ENCODE measurements at regions of chr19 and their contacts with region 1.

Region 1: DNA sequence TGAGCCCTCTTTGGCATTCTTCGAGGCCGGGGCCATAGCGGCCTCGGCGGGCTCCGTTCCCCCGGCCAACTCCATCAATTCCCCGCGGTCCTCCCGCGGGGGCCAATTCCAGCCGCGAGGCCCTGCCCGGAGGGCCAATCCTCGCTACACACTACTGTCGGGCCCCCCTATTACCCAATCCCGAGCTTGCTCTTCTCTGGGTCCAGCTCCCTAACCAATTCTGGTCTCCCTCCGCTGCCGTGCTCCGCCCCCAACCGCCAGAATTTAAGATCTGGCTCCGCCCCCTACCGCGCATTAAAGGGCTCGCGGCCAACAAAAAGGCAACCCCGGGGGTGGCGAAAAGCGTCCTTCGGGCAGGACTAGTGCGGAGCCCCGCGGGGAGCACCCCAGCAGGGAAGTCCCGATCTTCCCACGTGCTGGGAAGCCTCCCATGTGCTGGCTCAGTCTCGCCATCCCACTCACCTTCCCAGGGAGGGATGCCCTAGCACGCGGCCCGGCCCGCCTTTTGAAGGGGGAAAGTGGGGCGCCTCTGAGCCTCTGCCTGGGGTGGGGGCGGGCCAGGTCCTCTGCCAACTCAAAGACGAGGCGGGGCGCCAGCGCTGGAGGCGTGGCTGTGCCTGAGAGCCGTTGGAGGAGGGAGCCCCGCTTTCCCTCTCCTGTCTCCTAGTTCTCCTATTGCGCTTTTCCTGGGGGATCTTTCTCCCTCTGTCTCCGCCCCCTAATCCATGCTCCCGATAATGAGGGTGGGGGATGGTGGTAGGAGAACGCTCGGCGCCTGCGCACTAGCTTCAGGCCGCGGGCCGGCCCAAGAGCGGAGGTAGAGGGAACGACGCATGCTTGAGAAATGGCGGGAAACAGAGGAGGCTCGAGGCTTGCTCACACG is 3.5 kb downstream of the LIPE start:
- DNase-seq: peak; percentile 94 to 100
- ATAC-seq: peak; percentile 80 to 96
- H3K4me3 ChIP-seq: peak overlapping the region; percentile 48
- H3K27ac ChIP-seq: peak overlapping the region; percentile 52 to 78
- H3K4me1 ChIP-seq: peaks cover 18% of the 10 kb centered on the region
- CTCF ChIP-seq: no peak
- EP300 ChIP-seq: no peak
- POLR2A ChIP-seq: no peak
- RAD21 ChIP-seq: no peak

Region 2: GRCh38 chr19:42386974-42387707 is 36.6 kb before region 1 on chr19:
- CTCF ChIA-PET with region 1: interaction called, 21 read pairs
- POLR2A ChIA-PET with region 1: no interaction called
- DNase-seq: peak; percentile 95 to 100
- ATAC-seq: peak; percentile 92 to 97
- H3K4me3 ChIP-seq: peak overlapping the region; percentile 49
- H3K27ac ChIP-seq: peak overlapping the region; percentile 80 to 86
- H3K4me1 ChIP-seq: peaks cover 9% of the 10 kb centered on the region; the same call in 2 of the 3 replicates
- CTCF ChIP-seq: peak; percentile 93
- EP300 ChIP-seq: no peak
- POLR2A ChIP-seq: peak; percentile 98
- RAD21 ChIP-seq: peak; percentile 56 to 74

Region 3: DNA sequence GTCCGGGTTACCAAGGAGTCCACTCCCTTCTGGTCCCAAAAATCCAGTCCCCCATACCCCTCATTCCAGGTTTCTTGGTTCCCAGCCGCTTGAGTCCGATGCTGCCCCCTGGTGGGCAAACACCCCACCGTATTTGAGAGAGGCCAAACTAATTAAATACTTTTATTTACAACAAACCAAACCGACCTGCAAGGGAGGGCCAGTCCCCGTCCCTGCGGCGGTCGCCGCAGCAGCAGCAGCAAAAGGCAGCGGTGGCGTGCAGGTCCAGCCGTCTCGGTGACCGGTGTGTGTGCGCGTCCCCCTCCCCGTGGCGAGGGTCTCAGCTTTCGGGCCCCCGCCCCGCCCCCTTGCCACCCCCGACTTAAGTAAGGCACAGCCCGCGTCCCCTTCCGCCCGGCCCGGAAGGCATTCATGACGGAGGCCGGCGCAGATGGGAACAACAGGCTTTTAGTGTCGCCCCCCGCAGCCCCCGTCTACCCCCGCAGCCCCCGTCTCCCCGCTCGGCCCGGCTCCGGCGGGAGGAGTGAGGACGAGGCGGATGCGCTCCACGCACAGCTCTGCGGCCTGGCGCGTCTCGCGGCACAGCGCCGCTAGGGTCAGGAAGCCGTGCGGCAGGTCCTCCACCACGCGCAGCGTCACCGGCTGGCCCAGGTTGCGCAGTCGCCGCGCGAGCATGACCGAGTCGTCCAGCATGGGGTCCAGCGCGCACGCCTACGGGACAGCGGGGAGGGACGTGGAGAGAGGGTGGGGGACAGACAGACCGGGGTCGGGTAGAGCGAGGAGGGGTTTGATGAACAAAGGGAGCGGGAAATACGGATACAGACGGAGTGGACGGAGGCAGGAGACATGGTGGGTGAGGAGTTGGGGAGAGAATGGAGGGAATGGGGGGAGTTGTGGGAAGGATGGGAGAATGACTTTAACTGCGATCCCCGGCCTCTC is 22.1 kb before region 1 on chr19:
- CTCF ChIA-PET with region 1: interaction called, 302 read pairs
- POLR2A ChIA-PET with region 1: interaction called, 6 read pairs
- DNase-seq: peak; percentile 89 to 96
- ATAC-seq: peak; percentile 63 to 75
- H3K4me3 ChIP-seq: peak overlapping the region; percentile 56
- H3K27ac ChIP-seq: peak overlapping the region; percentile 72 to 84
- H3K4me1 ChIP-seq: peaks cover 19% of the 10 kb centered on the region
- CTCF ChIP-seq: peak; percentile 99
- EP300 ChIP-seq: no peak
- POLR2A ChIP-seq: peak; percentile 91
- RAD21 ChIP-seq: peak in 1 of 2 experiments; percentile 67; a peak in 4 of 5 replicates

Region 4: DNA sequence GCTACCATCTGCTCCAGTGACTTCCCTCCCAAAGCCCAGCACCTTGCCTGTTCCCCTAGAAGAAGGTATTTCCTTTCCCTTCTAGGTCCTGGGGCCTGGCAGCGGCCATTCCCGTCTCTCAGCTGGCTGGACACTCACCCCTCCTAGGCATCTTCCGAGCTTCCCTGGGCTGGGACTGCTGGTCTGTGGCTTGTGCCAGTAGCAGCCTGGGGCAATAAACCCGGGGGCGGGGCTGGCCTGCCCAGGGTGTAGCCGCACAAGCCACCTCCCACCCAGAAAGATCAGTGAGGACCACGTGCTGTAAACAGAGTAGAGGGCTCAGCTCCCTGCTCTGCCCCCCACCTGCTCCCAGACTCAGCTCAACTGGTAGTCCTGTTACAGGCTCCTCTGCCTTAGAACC is 11.5 kb before region 1 on chr19:
- CTCF ChIA-PET with region 1: interaction called, 302 read pairs
- POLR2A ChIA-PET with region 1: interaction called, 7 read pairs
- DNase-seq: no peak
- ATAC-seq: peak; percentile 12; a peak in 4 of 6 replicates
- H3K4me3 ChIP-seq: no peak overlapping the region
- H3K27ac ChIP-seq: no peak overlapping the region
- H3K4me1 ChIP-seq: no peaks in the 10 kb centered on the region
- CTCF ChIP-seq: no peak
- EP300 ChIP-seq: no peak
- POLR2A ChIP-seq: no peak
- RAD21 ChIP-seq: no peak

Region 5: GRCh38 chr19:42521346-42522030 is 97.8 kb after region 1 on chr19:
- CTCF ChIA-PET with region 1: no interaction called
- POLR2A ChIA-PET with region 1: no interaction called
- DNase-seq: no peak
- ATAC-seq: no peak
- H3K4me3 ChIP-seq: no peak overlapping the region
- H3K27ac ChIP-seq: no peak overlapping the region
- H3K4me1 ChIP-seq: no peaks in the 10 kb centered on the region
- CTCF ChIP-seq: no peak
- EP300 ChIP-seq: no peak
- POLR2A ChIP-seq: no peak
- RAD21 ChIP-seq: no peak

Region 6: DNA sequence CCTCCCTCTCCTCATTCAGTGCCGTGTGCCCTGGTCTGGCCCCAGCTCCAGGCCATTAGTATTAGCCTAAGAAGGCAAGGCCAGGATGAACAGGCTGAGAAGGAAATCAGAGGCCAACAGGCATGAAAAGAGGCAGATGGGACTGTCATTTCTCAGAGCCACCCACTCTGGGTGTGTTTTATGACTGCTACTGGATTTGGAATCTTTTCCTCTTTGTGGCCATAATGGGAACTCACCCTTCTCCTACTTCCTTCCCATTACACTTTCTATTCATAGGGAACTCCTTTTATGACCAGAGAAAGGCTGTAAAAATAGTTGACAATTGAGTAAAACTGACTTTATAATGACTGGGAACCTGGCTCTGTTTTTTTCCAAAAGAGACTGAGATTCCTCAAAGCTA is 153.3 kb after region 1 on chr19:
- CTCF ChIA-PET with region 1: no interaction called
- POLR2A ChIA-PET with region 1: no interaction called
- DNase-seq: no peak
- ATAC-seq: no peak; a peak in 1 of 6 replicates
- H3K4me3 ChIP-seq: no peak overlapping the region
- H3K27ac ChIP-seq: no peak overlapping the region
- H3K4me1 ChIP-seq: no peaks in the 10 kb centered on the region
- CTCF ChIP-seq: no peak
- EP300 ChIP-seq: no peak
- POLR2A ChIP-seq: no peak
- RAD21 ChIP-seq: no peak

Measured in A549 (cell line).